T-cell (primary cell): ENCODE measurements at regions of chr12 and their contacts with region 1.

Region 1: GRCh38 chr12:12916135-12916944 is 25.0 kb downstream of the GPRC5A start:
- DNase-seq: peak; percentile 55 to 89 (median 78)
- ATAC-seq: peak; percentile 98 to 99 (median 98)
- H3K4me3 ChIP-seq: no peak overlapping the region
- H3K4me3 Mint-ChIP-seq: peak overlapping the region in 1 of 3 donors; percentile 57
- H3K27ac ChIP-seq: no peak overlapping the region
- H3K27ac Mint-ChIP-seq: no peak overlapping the region
- H3K4me1 ChIP-seq: peaks cover 0 to 8% of the 10 kb centered on the region in 2 experiments
- H3K4me1 Mint-ChIP-seq: peaks cover 9 to 11% (median 10%) of the 10 kb centered on the region in 3 donors
- H3K27me3 ChIP-seq: peaks cover 0 to 4% of the 10 kb centered on the region in 2 experiments
- H3K27me3 Mint-ChIP-seq: peaks cover 9 to 10% of the 10 kb centered on the region in 2 donors

Region 2: DNA sequence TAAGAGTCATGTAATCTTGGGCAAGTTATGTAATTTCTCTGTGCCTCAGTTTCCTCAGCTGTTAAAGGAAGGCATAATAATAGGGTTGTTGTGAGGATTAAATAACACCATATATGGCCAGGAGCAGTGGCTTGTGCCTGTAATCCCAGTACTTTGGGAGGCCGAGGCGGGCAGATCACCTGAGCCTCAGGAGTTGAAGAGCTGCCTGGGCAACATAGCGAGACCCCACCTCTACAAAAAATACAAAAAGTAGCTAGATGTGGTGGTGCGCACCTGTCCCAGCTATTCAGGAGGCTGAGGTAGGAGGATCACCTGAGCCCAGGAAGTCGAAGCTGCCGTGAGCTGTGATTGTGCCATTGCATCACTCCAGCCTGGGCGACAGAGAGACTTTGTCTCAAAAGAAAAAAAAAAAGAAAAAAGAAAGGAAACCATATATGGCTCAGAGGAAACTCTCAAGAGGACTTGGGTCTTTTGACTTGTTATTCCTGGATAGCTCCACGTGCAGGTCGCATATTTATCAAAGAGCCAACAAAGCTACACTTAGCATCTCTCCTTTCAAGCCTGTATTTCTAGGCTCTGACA is 18.1 kb before region 1 on chr12:
- CTCF ChIA-PET with region 1: interaction called in 1 of 2 experiments, 10 read pairs
- POLR2A ChIA-PET with region 1: no interaction called
- DNase-seq: no peak
- ATAC-seq: no peak
- H3K4me3 ChIP-seq: no peak overlapping the region
- H3K4me3 Mint-ChIP-seq: no peak overlapping the region
- H3K27ac ChIP-seq: no peak overlapping the region
- H3K27ac Mint-ChIP-seq: no peak overlapping the region
- H3K4me1 ChIP-seq: no peaks in the 10 kb centered on the region
- H3K4me1 Mint-ChIP-seq: peaks cover 0 to 6% (median 0%) of the 10 kb centered on the region in 3 donors
- H3K27me3 ChIP-seq: peaks cover 0 to 8% of the 10 kb centered on the region in 2 experiments
- H3K27me3 Mint-ChIP-seq: peaks cover 11 to 22% of the 10 kb centered on the region in 2 donors